ENCODE measurements at regions of chr4 and their contacts with region 1.

Region 1: DNA sequence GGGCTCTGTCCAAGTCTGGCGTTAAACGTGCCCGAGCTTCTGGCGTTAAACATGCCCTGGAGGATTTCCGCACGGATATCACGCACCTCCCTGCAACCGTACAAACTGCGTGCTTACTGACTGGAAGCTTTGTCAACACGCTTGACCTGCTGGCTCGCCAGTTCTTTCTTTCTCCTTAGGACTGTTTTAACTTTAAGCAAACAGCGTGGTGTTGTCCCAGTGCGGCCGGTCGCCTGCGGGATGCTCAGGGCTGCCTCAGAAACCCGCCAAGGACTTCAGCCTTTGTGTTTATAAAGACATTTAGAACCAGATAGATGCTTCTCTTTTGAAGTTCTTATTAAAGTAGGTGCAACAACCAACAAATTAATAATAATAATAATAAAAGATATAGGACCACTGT is 946.0 kb downstream of the RAB28 start:
- DNase-seq: no peak
- CTCF ChIP-seq: no peak

Region 2: DNA sequence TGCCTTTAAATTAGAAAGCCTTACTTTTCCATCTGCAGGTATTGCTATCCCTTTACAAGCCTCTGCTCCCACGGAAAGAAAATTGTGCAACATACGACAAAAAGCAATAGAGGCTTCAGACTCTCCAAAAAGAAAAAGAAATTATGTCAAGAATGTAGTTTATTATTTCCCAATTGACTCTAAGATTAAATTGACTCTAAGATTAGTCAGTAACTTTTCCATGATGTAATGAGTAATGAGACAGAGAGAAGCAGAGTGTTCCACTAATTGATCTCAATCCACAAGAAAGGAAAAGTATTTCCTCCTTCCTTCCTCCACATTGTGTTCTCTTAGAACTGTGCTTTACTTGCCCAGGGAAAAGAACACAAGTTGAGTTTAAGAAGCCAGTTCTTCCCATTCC is 763.8 kb before region 1 on chr4:
- CTCF ChIA-PET with region 1: no interaction called
- POLR2A ChIA-PET with region 1: interaction called, 12 read pairs
- DNase-seq: no peak
- CTCF ChIP-seq: no peak

Region 3: DNA sequence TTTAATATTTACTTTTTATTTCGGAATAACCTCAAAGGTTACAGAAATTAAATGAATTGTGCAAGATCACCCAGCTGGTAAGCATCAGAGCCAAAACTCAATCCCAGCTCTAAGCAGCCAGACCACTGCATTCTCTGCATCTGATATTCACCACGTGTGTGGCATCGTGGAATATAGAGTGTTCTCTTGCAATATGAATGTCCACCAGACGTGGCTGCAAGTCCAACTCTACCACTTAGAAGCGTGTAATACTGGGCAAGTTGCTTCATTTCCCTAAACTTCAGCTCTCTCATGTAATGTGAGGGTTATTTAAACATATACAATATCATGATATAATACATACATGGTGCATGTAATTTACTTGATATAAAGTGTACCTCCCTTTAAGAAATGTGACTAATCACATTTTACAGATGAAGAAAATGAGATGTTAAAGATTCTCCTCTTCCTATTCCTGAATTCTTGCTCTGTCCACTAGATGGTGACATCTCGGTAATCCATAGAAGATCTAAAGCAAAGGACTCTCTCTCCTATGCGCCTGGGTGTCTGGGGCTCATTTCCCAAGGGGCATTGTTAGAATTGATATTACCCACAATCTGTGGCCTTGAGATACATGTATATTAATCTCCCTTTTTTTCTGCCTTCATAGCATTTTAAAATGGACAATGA is 140.9 kb after region 1 on chr4:
- CTCF ChIA-PET with region 1: no interaction called
- POLR2A ChIA-PET with region 1: no interaction called
- DNase-seq: peak; percentile 2
- CTCF ChIP-seq: no peak